Activated CD4-positive, alpha-beta T cell treated with anti-CD3 and anti-CD28 coated beads, Interleukin-2, amount 10 ng/mL, durations not matched to agents 24 days and 14 days (primary cell): ENCODE measurements at regions of chr12 and their contacts with region 1.

Region 1: GRCh38 chr12:75944097-75944904 is 87.3 kb downstream of the PHLDA1 start:
- DNase-seq: peak; percentile 77
- H3K4me3 Mint-ChIP-seq: peak overlapping the region; percentile 67
- H3K27ac Mint-ChIP-seq: peak overlapping the region; percentile 99
- H3K4me1 Mint-ChIP-seq: peaks cover 32% of the 10 kb centered on the region
- H3K27me3 Mint-ChIP-seq: no peaks in the 10 kb centered on the region

Region 2: DNA sequence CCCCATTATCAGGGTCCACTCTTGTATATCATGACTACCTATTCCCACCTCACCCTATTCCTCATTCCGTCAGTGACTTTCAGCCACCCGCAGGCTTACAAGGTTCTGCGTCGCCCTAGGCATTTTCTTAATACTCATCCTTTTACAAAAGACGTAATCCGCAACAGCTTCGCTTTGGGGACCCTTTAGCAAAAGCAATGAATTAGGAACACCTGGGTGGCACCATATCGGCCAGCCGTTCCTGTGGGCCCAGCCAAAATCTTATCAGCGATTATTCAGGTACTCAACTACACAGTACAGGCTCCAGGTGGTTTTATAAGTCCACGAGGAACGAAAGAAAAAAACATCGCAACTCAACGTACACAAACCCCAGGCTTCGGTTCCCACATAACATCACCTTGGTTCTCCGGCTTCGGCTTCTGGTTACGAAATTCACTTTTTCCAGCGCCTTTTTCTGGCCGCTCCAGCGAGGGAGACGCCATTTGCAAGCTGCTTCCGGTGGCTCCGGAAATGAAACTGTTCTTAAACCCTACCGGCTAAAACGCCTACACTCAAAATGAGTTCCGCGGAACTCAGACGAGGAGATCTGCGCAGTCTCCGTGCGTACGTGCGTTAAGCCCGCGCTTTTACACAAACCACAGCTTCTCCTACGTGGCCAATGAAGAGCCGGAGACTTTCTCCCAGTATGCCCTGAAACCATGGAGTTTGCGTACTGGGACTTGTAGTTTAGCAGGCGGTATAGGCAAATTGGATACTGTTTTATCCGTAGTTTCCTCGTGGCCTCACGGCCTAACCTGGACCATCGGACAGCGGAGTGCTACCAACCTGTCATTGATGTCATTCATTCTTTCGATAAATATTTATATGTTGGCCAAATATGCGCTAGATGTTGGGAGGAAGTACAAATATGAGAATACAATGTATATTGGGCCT is 432.9 kb before region 1 on chr12 and contains the start of gene KRR1:
- intact Hi-C with region 1: loop called (anchors 5 kb)
- DNase-seq: peak; percentile 97
- H3K4me3 Mint-ChIP-seq: peak within 1 kb of the TSS; percentile 98
- H3K27ac Mint-ChIP-seq: peak within 1 kb of the TSS; percentile 100
- H3K4me1 Mint-ChIP-seq: peaks cover 31% of the 10 kb centered on the region
- H3K27me3 Mint-ChIP-seq: peaks cover 3% of the 10 kb centered on the region
- total RNA-seq, gene KRR1: 134 and 141 TPM in 2 replicates

Region 3: DNA sequence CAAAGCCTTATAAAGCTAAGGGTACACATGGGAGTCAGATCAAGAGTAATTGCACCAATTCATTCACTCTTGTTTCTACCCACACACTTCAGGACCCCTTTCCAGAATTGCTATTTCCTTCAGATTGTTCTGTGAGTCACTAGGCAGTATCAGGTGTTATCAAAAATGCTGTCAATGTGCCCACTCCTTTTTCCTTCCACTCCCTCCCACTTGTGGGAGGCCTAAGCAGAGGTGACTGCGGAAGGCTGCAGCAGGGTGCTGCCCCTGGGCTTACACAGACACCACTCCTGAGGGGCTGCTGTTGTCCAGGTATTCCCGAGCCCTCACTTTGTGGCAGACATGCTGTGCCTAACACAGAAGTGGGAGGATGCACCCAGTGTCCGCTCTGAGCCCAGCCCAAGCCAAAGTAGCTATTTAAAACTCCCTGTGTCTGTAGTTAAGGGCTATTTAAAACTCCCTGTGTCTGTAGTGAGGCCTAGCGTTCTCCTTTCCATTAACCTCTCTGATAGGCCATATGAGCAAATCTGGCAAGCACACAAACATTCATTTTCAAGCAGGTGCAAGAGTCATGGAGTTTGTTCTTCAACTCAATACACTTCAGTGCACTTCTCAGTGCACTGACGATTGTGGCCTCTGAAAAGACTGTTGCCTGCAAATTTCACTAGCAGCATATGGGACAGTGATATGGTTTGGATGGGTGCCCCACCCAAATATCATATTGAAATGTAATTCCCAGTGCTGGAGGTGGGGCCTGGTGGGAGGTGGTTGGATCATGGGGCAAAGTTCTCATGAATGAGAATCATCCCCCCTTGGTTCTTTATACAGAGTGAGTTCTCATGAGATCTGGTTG is 30.6 kb before region 1 on chr12:
- intact Hi-C with region 1: loop called (anchors 1 kb)
- DNase-seq: peak; percentile 63
- H3K4me3 Mint-ChIP-seq: no peak overlapping the region
- H3K27ac Mint-ChIP-seq: peak overlapping the region; percentile 65
- H3K4me1 Mint-ChIP-seq: peaks cover 25% of the 10 kb centered on the region
- H3K27me3 Mint-ChIP-seq: peaks cover 3% of the 10 kb centered on the region

Region 4: GRCh38 chr12:75933101-75933500 is 11.2 kb before region 1 on chr12:
- intact Hi-C with region 1: loop called (anchors 1 kb)
- DNase-seq: no peak
- H3K4me3 Mint-ChIP-seq: no peak overlapping the region
- H3K27ac Mint-ChIP-seq: no peak overlapping the region
- H3K4me1 Mint-ChIP-seq: peaks cover 45% of the 10 kb centered on the region
- H3K27me3 Mint-ChIP-seq: no peaks in the 10 kb centered on the region

Region 5: DNA sequence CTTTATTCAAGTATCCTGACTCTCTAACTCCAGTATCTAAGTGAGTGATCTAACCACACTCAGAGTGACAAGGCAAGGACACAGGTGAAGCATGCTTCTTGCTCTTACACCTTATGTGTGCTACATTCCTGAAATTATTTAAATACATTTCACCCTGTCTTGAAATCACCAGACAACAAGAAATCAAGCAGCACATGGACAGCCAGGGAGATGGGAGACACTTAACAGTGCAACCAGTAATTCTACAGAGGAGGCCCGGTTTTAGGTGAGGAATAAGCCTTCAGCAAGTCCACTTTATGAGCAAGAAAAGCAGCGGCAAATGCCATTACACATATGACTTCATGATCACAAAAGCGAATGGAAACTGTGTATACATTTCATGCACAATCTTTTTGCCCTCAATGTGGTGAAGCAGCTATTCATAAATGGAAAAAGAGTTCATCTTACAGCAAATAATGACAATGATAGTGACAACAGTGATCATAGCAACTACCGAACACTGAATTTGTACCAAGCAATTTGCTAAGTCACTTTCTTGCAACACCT is 50.0 kb after region 1 on chr12:
- intact Hi-C with region 1: loop called (anchors 1 kb)
- DNase-seq: peak; percentile 71
- H3K4me3 Mint-ChIP-seq: peak overlapping the region; percentile 4
- H3K27ac Mint-ChIP-seq: peak overlapping the region; percentile 90
- H3K4me1 Mint-ChIP-seq: peaks cover 24% of the 10 kb centered on the region
- H3K27me3 Mint-ChIP-seq: no peaks in the 10 kb centered on the region

Region 6: GRCh38 chr12:76020731-76021672 is 76.7 kb after region 1 on chr12:
- intact Hi-C with region 1: loop called (anchors 1 kb)
- DNase-seq: peak; percentile 91
- H3K4me3 Mint-ChIP-seq: peak overlapping the region; percentile 72
- H3K27ac Mint-ChIP-seq: peak overlapping the region; percentile 98
- H3K4me1 Mint-ChIP-seq: peaks cover 51% of the 10 kb centered on the region
- H3K27me3 Mint-ChIP-seq: no peaks in the 10 kb centered on the region

Region 7: GRCh38 chr12:76158518-76159321 is 214.4 kb after region 1 on chr12:
- intact Hi-C with region 1: loop called (anchors 2 kb)
- DNase-seq: peak; percentile 91
- H3K4me3 Mint-ChIP-seq: peak overlapping the region; percentile 6
- H3K27ac Mint-ChIP-seq: peak overlapping the region; percentile 84
- H3K4me1 Mint-ChIP-seq: peaks cover 16% of the 10 kb centered on the region
- H3K27me3 Mint-ChIP-seq: peaks cover 30% of the 10 kb centered on the region